PC-3 (cell line): ENCODE measurements at regions of chr20 and their contacts with region 1.

Region 1: GRCh38 chr20:47317127-47317895 is 39.2 kb downstream of the ZMYND8 start:
- DNase-seq: peak; percentile 96
- ATAC-seq: peak; percentile 60
- H3K4me3 ChIP-seq: 0 out of 2 replicates have a peak overlapping the region, but pooled peaks have one; percentile 19
- H3K27ac ChIP-seq: peak overlapping the region; percentile 95
- H3K4me1 ChIP-seq: peaks cover 70% of the 10 kb centered on the region
- H3K27me3 ChIP-seq: no peaks in the 10 kb centered on the region
- CTCF ChIP-seq: no peak

Region 2: DNA sequence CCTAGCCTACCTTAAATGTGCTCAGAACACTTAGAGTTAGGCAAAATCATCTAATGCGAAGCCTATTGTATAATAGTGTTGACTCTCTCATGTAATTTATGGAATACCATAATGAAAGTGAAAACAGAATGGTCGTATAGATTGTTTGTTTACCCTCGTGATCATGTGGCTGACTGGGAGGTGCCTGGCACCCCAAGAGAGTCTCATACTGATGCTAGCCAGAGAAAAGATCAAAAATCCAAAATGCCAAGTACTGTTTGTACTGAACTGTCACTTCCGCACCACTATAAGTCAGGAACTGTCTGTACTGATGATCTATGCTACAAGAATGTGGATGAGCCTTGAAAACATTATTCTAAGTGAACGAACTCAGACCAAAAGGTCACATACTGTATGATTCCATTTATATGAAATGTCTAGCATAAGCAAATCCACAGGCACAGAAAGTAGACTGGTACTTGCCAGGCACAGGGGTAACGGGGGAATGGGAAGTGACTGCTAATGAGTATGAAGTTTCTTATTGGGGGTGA is 16.8 kb after region 1 on chr20:
- CTCF ChIA-PET with region 1: no interaction called
- POLR2A ChIA-PET with region 1: interaction called, 3 read pairs
- intact Hi-C with region 1: loop called (anchors 1 kb)
- DNase-seq: peak; percentile 98
- ATAC-seq: peak; percentile 95
- H3K4me3 ChIP-seq: peak overlapping the region; percentile 58
- H3K27ac ChIP-seq: peak overlapping the region; percentile 71
- H3K4me1 ChIP-seq: peaks cover 47% of the 10 kb centered on the region
- H3K27me3 ChIP-seq: no peaks in the 10 kb centered on the region
- CTCF ChIP-seq: no peak

Region 3: DNA sequence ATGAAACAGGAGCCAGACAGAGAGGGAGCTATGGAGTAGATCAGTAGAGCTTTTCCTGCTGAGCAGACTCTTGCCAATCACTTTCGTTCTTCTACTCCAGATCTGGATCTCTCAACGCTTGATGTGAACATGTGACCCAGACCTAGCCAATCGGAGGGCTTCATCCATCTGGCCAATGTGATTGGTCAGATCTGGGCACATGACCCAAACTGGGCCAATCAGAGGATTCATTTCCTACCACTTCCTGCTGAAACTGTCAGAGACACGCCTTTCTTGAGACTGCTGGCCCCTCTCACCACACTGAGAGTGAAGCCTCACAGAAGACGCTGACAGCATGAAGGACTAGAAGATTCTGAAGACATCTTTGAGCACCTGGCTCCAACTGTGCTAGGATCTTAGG is 83.4 kb after region 1 on chr20:
- CTCF ChIA-PET with region 1: no interaction called
- POLR2A ChIA-PET with region 1: no interaction called
- intact Hi-C with region 1: no loop called
- DNase-seq: peak; percentile 35
- ATAC-seq: no peak
- H3K4me3 ChIP-seq: no peak overlapping the region
- H3K27ac ChIP-seq: no peak overlapping the region
- H3K4me1 ChIP-seq: no peaks in the 10 kb centered on the region
- H3K27me3 ChIP-seq: no peaks in the 10 kb centered on the region
- CTCF ChIP-seq: no peak

Region 4: DNA sequence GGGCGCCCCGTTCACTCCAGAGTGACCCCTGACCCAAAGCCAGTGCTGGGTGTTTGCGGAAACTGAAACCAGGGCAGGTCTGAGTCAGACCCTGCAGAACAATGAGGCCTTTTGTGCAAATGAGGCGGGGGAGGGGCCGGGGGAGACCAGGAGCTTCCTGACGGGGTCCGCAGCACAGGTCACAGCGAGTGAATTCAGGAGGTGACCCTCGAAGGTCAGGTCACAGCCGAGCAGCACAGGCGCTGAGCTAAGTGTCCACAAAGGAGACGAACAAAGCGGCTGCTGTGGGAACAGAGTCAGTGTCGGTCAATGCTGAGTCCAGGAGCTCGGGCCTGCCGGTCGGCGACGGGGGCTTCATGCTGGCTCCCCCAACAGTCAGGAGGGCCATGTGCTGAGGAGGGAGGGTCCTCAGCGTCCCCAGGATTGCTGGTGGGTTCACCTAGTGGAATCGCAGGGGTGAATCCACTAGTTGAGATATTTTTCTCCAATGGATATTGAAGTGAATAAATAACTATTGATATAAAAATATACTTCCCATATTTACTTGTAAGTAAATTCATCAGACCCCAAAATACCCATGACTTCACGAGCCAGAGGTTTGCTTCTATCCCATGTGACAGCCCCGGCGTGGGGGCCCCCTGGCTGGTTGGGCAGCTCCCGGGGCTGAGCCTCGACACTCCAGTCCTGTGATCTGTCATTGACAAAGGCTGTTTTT is 656.4 kb after region 1 on chr20:
- CTCF ChIA-PET with region 1: no interaction called
- POLR2A ChIA-PET with region 1: interaction called, 11 read pairs
- intact Hi-C with region 1: no loop called
- DNase-seq: peak; percentile 77
- ATAC-seq: peak; percentile 80
- H3K4me3 ChIP-seq: no peak overlapping the region
- H3K27ac ChIP-seq: peak overlapping the region; percentile 89
- H3K4me1 ChIP-seq: peaks cover 41% of the 10 kb centered on the region
- H3K27me3 ChIP-seq: no peaks in the 10 kb centered on the region
- CTCF ChIP-seq: no peak